ENCODE measurements at regions of chr1 and their contacts with region 1.

Region 1: DNA sequence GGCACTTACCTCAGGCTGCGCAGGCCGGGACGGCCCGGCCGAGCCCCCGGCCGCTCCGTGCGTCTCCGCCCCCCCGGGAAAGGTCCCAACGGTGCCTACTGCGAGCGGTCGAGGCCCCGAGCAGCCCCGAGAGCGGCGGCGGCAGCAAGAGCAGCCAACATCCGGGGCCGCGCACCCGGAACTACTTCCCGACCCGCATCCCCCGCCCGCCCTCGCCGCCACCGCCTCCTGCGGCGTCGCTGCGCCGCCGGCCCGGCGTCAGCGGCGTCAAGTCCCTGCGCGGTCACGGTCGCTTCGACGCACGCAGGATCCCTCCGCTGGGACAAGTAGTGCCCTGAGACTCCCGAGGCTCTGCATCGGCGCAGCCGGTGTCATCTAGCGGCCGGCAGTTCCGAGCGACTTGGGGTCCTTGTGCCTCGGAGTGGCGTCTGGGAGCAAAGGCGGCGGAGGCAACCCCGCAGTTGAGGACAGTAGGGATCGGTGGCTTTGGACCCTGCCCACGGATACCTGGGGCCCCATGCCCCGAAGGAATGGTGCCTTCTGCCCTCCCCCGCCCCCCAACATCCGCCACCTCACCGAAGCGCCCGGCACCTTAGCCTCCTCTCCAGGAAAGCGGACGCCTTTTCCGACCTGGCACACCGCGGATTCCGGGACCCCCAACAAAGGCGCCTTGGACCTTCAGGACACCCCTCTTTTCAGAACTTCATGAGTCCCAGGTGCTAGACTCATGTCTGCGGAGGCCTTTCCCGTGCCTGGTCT is at the start of gene FOXJ3:
- DNase-seq: peak; percentile 95
- ATAC-seq: peak; percentile 67
- H3K4me3 ChIP-seq: peak within 1 kb of the TSS; percentile 74
- H3K27ac ChIP-seq: peak within 1 kb of the TSS; percentile 78
- H3K4me1 ChIP-seq: peaks cover 25% of the 10 kb centered on the region
- H3K27me3 ChIP-seq: no peaks in the 10 kb centered on the region
- CTCF ChIP-seq: no peak
- total RNA-seq, gene FOXJ3: 22.7 and 23.4 TPM in 2 replicates

Region 2: GRCh38 chr1:41842993-41843755 is 492.1 kb before region 1 on chr1:
- CTCF ChIA-PET with region 1: no interaction called
- POLR2A ChIA-PET with region 1: no interaction called
- intact Hi-C with region 1: loop called (anchors 10 kb)
- DNase-seq: peak; percentile 68
- ATAC-seq: peak; percentile 19
- H3K4me3 ChIP-seq: no peak overlapping the region
- H3K27ac ChIP-seq: peak overlapping the region; percentile 67
- H3K4me1 ChIP-seq: peaks cover 71% of the 10 kb centered on the region
- H3K27me3 ChIP-seq: no peaks in the 10 kb centered on the region
- CTCF ChIP-seq: 0 out of 2 replicates have a peak, but pooled peaks have one; percentile 21

Region 3: DNA sequence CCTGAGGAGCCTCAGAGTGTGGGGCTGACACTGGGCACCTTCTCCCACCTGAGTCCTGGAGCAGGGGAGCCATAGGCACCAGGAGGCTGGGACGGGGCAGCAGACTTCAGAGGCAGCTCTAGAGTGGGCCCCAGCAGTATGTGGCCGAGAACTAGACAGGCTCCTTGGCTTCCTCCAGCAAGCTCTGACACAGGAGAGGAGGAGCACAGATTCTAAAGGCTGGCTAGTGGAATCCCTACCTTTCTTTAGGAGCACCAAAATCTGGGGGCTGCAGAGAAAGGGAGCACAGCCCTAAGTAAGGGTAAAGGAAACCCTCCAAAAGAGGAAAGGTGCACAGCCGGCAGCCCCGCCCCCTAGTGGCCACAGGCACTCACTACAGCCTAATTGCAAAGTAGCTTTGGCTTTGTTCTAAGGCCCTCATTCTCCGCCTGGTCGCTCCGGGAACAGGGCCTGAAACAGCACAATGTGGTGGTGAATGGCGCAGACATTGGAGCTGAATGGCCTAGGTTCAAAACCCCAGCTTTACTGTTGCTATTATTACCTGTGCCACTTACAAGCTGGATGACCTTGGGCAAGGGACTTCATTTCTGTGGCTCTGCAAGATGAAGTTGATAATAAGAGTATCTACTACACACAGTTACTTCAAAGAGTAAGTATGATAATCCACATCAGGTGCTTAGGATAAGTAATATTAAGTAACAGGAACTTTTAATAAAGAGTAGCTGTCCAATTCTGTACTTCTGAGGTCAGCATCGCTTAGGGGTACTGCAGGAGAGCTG is 161.9 kb before region 1 on chr1:
- CTCF ChIA-PET with region 1: interaction called, 3 read pairs
- POLR2A ChIA-PET with region 1: no interaction called
- intact Hi-C with region 1: loop called (anchors 2 kb)
- DNase-seq: peak; percentile 56
- ATAC-seq: peak; percentile 31
- H3K4me3 ChIP-seq: no peak overlapping the region
- H3K27ac ChIP-seq: peak overlapping the region; percentile 88
- H3K4me1 ChIP-seq: peaks cover 64% of the 10 kb centered on the region
- H3K27me3 ChIP-seq: no peaks in the 10 kb centered on the region
- CTCF ChIP-seq: peak; percentile 98

Region 4: GRCh38 chr1:42306977-42307376 is 28.3 kb before region 1 on chr1:
- CTCF ChIA-PET with region 1: no interaction called
- POLR2A ChIA-PET with region 1: no interaction called
- intact Hi-C with region 1: no loop called
- DNase-seq: no peak
- ATAC-seq: no peak
- H3K4me3 ChIP-seq: no peak overlapping the region
- H3K27ac ChIP-seq: no peak overlapping the region
- H3K4me1 ChIP-seq: no peaks in the 10 kb centered on the region
- H3K27me3 ChIP-seq: no peaks in the 10 kb centered on the region
- CTCF ChIP-seq: no peak

Region 5: GRCh38 chr1:42348498-42348897 is 13.3 kb after region 1 on chr1:
- CTCF ChIA-PET with region 1: no interaction called
- POLR2A ChIA-PET with region 1: no interaction called
- intact Hi-C with region 1: no loop called
- DNase-seq: no peak
- ATAC-seq: no peak
- H3K4me3 ChIP-seq: no peak overlapping the region
- H3K27ac ChIP-seq: no peak overlapping the region
- H3K4me1 ChIP-seq: no peaks in the 10 kb centered on the region
- H3K27me3 ChIP-seq: no peaks in the 10 kb centered on the region
- CTCF ChIP-seq: no peak

Region 6: GRCh38 chr1:42462828-42463763 is 127.9 kb after region 1 on chr1 and contains the start of gene CCDC30:
- CTCF ChIA-PET with region 1: no interaction called
- POLR2A ChIA-PET with region 1: no interaction called
- intact Hi-C with region 1: loop called (anchors 2 kb)
- DNase-seq: peak; percentile 99
- ATAC-seq: peak; percentile 98
- H3K4me3 ChIP-seq: peak within 1 kb of the TSS; percentile 85
- H3K27ac ChIP-seq: peak within 1 kb of the TSS; percentile 29
- H3K4me1 ChIP-seq: peaks cover 18% of the 10 kb centered on the region
- H3K27me3 ChIP-seq: no peaks in the 10 kb centered on the region
- CTCF ChIP-seq: no peak
- total RNA-seq, gene CCDC30: 0.46 and 0.58 TPM in 2 replicates

Region 7: DNA sequence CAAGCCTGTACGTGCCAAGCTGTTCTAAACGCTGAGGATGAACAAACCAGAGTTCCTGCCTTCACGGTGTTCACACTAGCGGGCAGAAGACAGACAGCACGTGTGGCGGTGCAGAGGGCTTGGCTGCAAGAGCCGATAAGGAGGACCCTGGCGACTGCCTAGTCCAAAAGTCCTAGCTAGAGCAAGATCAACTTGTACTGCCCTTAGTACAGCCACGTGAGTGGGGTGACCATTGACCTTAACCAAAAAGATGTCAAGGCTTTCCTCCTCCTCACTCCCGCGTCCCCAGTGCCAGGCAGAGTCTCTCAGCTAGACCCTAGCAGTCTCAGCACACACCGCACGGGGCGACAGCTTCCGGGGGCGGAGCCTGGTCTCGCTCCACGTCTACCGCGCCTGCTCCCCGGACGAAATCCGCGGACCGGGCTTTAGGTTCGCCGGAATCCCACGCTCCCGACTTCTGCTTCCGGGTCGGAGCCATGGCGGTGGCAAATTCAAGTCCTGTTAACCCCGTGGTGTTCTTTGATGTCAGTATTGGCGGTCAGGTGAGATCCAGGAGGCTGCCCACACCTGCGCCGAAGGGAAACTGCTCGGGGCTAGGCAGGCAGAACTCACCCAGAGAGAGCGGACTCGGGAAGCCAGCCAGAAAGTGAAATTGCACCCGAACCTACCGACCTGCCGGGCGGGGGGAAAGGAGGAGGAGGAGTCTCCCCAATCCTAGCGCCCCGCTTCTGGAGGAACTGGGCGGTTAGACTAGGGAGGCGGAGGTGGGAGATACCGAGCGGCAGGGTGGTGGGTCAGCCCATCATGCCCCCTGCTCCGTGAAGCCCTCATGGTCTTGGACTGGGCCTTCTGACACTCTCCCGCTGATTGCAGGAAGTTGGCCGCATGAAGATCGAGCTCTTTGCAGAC is 323.0 kb after region 1 on chr1 and contains the start of gene PPIH:
- CTCF ChIA-PET with region 1: no interaction called
- POLR2A ChIA-PET with region 1: no interaction called
- intact Hi-C with region 1: loop called (anchors 10 kb)
- DNase-seq: peak; percentile 92
- ATAC-seq: peak; percentile 99
- H3K4me3 ChIP-seq: peak within 1 kb of the TSS; percentile 97
- H3K27ac ChIP-seq: peak within 1 kb of the TSS; percentile 64
- H3K4me1 ChIP-seq: peaks cover 22% of the 10 kb centered on the region
- H3K27me3 ChIP-seq: peaks cover 6% of the 10 kb centered on the region; the same call in 1 of the 2 replicates
- CTCF ChIP-seq: no peak
- total RNA-seq, gene PPIH: 81.5 and 103 TPM in 2 replicates

Region 8: DNA sequence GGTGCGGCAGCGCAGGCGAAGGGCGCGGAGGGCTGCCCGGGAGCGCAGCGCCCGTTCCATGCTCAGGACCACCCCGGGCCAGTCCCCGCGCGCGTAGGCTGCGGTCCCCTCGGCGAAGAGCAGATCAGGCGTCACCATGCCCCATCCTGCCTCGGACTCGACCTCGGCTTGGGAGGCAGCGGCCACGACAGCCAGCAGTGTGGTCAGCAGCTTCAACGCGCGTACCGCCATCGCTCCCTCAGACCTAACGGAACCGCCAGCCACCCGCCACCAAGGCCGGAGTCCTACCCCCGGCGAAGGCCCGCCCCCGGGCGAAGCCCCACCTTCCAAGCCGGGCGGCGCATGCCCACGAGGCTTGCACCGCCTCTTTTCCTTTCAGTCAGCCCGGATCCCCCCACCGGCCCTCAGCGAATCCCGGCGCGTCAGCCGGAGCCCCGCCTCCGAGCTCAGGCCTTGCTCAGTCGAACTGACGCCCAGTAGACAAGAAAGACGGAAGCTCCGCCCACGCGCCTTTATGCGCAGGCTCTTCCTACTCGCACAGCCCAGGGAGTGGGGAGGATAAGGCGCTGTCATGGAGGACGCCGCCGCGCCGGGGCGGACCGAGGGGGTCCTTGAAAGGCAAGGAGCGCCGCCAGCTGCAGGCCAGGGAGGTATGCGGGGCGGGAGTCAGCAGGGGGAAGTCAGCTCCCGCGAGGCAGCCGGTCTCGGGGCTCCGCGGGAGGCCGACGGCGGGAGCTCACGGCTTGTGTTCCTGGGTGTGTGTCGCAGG is 431.7 kb after region 1 on chr1 and contains the starts of genes C1orf50 and P3H1:
- CTCF ChIA-PET with region 1: no interaction called
- POLR2A ChIA-PET with region 1: no interaction called
- intact Hi-C with region 1: loop called (anchors 10 kb)
- DNase-seq: peak; percentile 99
- ATAC-seq: peak; percentile 93
- H3K4me3 ChIP-seq: peak within 1 kb of the TSS; percentile 89
- H3K27ac ChIP-seq: no peak within 1 kb of the TSS
- H3K4me1 ChIP-seq: peaks cover 22% of the 10 kb centered on the region
- H3K27me3 ChIP-seq: no peaks in the 10 kb centered on the region
- CTCF ChIP-seq: no peak
- total RNA-seq, gene C1orf50: 3.4 and 4.1 TPM in 2 replicates
- total RNA-seq, gene P3H1: 28.2 and 28.3 TPM in 2 replicates